ENCODE measurements at regions of chr9 and their contacts with region 1.

Region 1: GRCh38 chr9:93453047-93453914 is at the start of gene FAM120AOS:
- DNase-seq: peak; percentile 95
- H3K4me3 Mint-ChIP-seq: peak within 1 kb of the TSS; percentile 92
- H3K27ac Mint-ChIP-seq: peak within 1 kb of the TSS; percentile 94
- H3K4me1 Mint-ChIP-seq: peaks cover 41% of the 10 kb centered on the region
- H3K27me3 Mint-ChIP-seq: no peaks in the 10 kb centered on the region
- total RNA-seq, gene FAM120AOS: 31.6 and 33.9 TPM in 2 replicates

Region 2: DNA sequence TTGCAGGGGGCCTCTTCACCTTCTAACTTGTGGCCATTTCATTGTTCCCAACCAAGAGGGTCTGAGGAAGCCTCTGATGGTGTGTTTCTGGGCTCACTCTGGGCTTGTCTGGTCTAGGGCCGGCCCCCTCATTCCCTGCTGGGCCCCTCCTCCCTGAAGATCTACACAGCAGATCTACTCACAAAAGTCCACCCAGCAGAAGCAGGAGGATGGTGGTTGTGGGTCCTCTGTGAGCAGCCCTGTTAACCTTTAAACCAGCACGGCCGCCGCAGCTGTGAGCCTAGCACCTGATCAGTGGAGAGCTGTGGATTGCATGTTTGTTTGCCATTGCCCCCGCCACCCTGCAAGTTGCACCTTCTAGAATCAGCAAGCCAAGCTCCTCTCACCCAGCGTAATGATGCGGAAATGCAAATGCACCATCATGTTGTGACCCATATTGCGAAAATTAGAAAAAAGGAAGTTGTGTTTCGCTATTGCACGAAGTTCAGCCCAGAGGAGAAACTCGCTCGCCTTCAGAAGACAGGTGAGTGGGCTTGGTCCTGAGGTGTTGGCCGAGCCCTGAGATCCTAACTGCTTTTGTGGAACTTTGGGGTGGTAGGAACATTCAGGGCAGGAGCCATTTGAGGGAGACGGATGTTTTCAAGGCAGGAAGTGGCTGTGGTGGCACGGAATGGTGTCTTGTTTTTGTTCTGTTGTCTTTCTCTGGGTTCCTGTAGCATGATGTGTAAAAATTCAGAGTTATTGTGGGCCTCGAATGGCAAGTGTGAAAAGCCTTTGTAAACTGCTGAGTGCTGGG is 489.3 kb before region 1 on chr9:
- intact Hi-C with region 1: loop called (anchors 5 kb)
- DNase-seq: peak; percentile 93
- H3K4me3 Mint-ChIP-seq: peak overlapping the region; percentile 92
- H3K27ac Mint-ChIP-seq: peak overlapping the region; percentile 98
- H3K4me1 Mint-ChIP-seq: peaks cover 48% of the 10 kb centered on the region
- H3K27me3 Mint-ChIP-seq: no peaks in the 10 kb centered on the region

Region 3: GRCh38 chr9:93159601-93160471 is 293.4 kb before region 1 on chr9:
- intact Hi-C with region 1: loop called (anchors 1 kb)
- DNase-seq: peak; percentile 93
- H3K4me3 Mint-ChIP-seq: no peak overlapping the region
- H3K27ac Mint-ChIP-seq: peak overlapping the region; percentile 73
- H3K4me1 Mint-ChIP-seq: peaks cover 21% of the 10 kb centered on the region
- H3K27me3 Mint-ChIP-seq: no peaks in the 10 kb centered on the region

Region 4: GRCh38 chr9:93501406-93501805 is 48.1 kb after region 1 on chr9:
- intact Hi-C with region 1: loop called (anchors 2 kb)
- DNase-seq: peak; percentile 69
- H3K4me3 Mint-ChIP-seq: peak overlapping the region; percentile 79
- H3K27ac Mint-ChIP-seq: peak overlapping the region; percentile 70
- H3K4me1 Mint-ChIP-seq: peaks cover 44% of the 10 kb centered on the region
- H3K27me3 Mint-ChIP-seq: no peaks in the 10 kb centered on the region

Region 5: DNA sequence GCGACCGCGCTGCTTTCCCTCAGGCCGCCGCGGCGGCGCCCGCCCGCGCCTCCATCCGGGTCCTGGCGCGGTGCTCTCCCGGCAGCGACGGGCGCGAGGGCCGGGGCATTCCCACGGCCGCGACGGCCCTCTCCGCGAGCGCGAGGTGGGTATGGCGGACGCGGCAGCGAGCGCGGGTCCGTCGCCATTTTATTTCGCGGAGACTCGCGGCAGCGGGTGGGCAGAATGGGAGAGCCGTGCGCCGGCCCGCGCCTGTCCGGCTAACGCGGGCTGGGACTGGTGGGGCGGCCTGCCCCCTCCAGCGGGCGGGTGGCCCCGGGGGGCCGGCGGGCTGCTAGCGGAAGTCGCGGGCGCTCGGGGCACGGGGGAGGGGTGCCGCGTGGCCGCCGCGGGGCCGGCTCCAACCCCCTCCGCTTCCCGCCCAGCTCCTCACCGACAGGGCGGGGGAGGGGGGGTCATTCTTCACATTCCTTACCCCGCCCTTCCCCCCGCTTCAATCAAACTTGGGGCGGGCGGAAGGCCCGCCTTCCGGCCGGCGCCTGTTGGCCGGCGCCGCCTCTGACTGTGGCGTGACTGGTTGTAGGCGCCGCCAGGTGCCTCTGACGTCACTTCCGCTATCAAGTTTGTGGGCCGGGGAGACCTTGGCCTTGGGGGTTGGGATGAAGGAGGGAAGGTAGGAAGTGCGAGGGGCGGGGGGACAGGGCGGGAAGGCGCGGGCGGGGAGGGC is 713.1 kb after region 1 on chr9:
- intact Hi-C with region 1: loop called (anchors 5 kb)
- DNase-seq: peak; percentile 98
- H3K4me3 Mint-ChIP-seq: peak overlapping the region; percentile 90
- H3K27ac Mint-ChIP-seq: peak overlapping the region; percentile 88
- H3K4me1 Mint-ChIP-seq: peaks cover 37% of the 10 kb centered on the region
- H3K27me3 Mint-ChIP-seq: no peaks in the 10 kb centered on the region